ENCODE measurements at regions of chr9 and their contacts with region 1.

Region 1: DNA sequence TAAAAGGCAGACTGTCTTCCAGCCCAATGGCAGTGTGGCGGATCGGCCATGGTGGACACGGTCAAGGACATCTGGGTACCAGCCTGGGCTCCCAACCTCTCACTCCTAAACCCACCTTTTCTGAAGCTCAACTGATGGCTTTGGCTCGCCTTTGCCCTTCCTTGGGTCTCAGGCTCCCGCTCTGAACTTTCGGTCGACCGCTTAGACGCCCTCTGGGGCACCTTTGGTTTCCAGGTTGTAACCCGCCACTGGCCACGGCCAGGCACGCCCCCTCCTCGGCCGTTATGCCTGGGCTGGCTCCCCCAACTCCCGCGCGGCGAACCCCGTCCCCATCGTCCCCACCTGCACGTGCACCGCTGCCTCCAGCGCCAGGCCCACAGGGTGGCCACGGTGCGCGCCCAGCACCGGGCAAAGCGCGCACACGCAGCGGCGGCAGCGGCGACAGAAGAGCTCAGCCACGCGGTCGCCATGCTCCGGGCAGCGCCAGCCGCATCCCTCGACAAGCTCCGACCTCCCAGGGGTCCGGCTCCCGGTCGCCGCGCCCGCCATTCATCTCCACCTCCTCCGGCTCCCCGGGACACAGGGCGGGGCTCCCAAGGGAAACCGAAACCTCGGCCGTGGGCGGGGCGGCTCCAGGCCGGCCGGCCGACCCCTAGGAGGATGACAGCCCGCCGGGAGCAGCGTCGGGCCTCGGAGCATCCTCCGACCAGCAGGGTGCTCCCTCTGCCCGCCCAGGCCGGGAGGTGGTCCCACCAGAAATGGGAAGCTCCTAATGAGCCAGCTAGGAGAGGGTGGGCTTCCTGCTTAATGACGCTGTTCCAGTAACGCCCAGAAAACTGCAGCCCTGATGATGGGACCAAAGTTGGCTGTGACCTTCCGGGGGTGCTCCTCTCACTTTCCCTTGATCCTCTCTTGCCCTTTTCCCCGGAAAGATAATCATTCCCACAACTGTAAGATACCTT is at the start of gene TRIM14:
- DNase-seq: peak; percentile 72
- H3K4me3 Mint-ChIP-seq: peak within 1 kb of the TSS; percentile 81
- H3K27ac Mint-ChIP-seq: peak within 1 kb of the TSS; percentile 90
- H3K4me1 Mint-ChIP-seq: peaks cover 49% of the 10 kb centered on the region
- H3K27me3 Mint-ChIP-seq: no peaks in the 10 kb centered on the region
- total RNA-seq, gene TRIM14: 99.4 to 101 TPM

Region 2: DNA sequence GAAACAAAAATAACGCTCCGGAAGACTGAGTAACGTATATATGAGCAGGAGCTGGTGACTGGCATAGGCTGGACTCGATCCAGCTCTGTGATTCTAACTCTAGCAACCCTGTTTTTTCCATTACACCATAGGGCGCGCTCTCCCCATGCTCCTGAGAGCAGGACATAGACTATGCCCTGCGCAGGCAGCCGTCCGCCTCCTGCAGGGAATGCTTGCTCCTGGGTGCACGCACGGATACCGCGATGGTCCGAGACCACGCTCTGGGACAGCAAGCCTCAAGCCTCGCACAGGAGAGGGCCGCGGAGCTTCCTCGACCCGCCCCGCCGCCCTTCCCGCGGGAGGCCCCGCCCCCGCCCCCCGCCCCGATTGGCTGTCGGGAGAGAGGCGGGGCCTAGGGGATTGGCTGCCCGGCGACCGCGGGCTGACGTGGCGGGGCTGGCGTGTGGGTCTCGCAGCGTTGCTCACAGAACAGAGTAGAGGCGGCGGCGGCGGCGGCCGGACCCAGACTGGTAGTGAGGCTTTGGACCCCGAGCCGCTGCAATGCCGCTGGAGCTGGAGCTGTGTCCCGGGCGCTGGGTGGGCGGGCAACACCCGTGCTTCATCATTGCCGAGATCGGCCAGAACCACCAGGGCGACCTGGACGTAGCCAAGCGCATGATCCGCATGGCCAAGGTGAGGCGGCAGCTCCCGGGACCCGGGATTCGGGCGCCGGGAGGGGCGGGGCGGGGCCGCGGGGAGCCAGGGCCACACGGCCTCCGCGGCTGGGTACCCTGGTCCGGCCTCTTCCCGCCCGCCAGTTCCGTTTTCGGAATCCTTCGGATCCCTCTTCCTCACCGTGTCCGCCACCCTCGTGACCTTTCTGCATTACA is 62.4 kb before region 1 on chr9 and contains the start of gene NANS:
- CTCF ChIA-PET with region 1: interaction called, 3 read pairs
- POLR2A ChIA-PET with region 1: interaction called, 21 read pairs
- DNase-seq: peak; percentile 94
- H3K4me3 Mint-ChIP-seq: peak within 1 kb of the TSS; percentile 97
- H3K27ac Mint-ChIP-seq: peak within 1 kb of the TSS; percentile 92
- H3K4me1 Mint-ChIP-seq: peaks cover 37% of the 10 kb centered on the region
- H3K27me3 Mint-ChIP-seq: no peaks in the 10 kb centered on the region
- total RNA-seq, gene NANS: 46.1 to 47.3 TPM

Region 3: GRCh38 chr9:98101868-98102273 is 17.1 kb before region 1 on chr9:
- CTCF ChIA-PET with region 1: interaction called, 61 read pairs
- POLR2A ChIA-PET with region 1: interaction called, 221 read pairs
- DNase-seq: peak; percentile 90
- H3K4me3 Mint-ChIP-seq: peak overlapping the region; percentile 70
- H3K27ac Mint-ChIP-seq: peak overlapping the region; percentile 97
- H3K4me1 Mint-ChIP-seq: peaks cover 87% of the 10 kb centered on the region
- H3K27me3 Mint-ChIP-seq: no peaks in the 10 kb centered on the region

Region 4: DNA sequence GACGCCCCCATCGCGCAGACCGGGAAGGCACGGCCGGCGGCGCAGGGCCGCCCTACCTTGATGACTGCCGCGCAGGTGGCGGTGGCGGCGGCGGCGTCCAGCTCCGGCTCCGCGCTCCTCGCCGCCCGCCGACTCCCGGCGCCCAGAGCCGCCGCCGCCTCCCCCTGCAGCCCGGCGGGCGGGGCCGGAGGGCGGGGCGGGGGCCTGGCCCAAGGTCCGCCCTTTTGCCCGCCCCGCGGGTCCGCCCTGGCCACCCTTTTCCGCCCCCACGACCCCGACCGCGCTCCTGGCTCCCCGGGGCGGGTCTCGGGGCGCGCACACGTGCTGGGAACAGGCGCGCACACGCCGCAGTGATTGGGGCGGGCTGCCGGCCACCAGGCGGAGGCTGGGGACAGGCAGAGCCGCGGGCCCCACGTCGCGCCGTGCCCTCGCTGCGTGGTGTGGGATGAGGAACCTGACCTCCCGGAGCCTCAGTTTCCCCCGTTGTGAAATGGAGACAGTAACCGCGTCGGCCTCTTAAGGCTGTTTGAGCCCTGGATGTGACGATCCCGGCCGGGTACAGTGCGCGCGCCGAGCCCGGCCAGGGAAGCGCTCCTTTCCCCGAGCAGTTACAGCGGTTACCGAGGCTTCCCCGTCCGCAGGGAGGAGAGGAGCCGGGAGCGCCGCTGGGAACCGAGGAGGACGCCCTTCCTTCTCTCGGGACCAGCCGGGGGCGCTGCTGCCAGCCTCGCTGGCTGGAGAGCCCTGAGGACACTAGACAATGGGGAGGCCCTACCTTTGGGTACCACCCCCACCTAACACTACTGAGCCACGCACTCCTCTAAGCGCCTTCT is 73.8 kb after region 1 on chr9 and contains the start of gene CORO2A:
- CTCF ChIA-PET with region 1: interaction called, 13 read pairs
- POLR2A ChIA-PET with region 1: interaction called, 41 read pairs
- DNase-seq: peak; percentile 71
- H3K4me3 Mint-ChIP-seq: peak within 1 kb of the TSS; percentile 80
- H3K27ac Mint-ChIP-seq: peak within 1 kb of the TSS; percentile 18
- H3K4me1 Mint-ChIP-seq: peaks cover 11% of the 10 kb centered on the region
- H3K27me3 Mint-ChIP-seq: no peaks in the 10 kb centered on the region
- total RNA-seq, gene CORO2A: 7.8 to 8.2 TPM

Region 5: DNA sequence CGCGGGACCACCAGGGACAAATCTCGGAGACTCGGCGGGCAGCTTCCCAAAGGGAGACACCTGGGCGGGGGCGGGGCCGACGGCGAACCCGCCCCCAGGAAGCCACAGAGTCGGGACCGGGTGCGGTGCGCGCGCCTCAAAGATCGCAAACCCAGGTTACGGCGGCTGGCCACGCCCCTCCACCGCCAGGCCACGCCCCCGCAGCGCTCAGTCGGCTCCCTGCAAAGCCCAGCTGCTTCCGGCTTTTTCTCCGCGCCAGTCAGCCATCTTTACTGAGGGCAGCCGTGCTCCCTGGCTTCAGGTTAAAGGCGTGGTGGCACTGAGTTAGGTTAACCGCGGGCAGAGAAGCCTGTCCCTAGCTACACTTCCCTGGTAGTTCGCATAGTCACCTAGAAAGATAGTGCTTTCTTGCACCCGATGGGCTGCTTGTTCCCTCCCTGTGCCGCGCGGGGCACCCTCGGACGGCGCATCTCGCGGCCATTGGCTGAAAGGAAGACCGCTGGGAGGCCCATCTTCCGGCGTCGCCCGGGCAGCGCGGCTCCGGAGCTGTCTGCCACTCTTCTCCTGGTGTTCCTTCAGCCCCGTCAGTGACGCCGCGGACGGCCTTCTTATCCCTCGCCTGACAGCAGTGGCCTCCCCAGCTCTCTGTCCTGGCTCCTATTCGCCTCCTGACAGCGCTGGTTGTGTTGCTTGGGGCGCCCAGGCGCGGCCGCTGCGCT is 136.8 kb after region 1 on chr9 and contains the start of gene TBC1D2:
- CTCF ChIA-PET with region 1: interaction called, 45 read pairs
- POLR2A ChIA-PET with region 1: interaction called, 64 read pairs
- DNase-seq: peak; percentile 98
- H3K4me3 Mint-ChIP-seq: peak within 1 kb of the TSS; percentile 93
- H3K27ac Mint-ChIP-seq: peak within 1 kb of the TSS; percentile 99
- H3K4me1 Mint-ChIP-seq: peaks cover 43% of the 10 kb centered on the region
- H3K27me3 Mint-ChIP-seq: no peaks in the 10 kb centered on the region
- total RNA-seq, gene TBC1D2: 11.0 to 11.9 TPM